ENCODE measurements at regions of chr5 and their contacts with region 1.

Region 1: GRCh38 chr5:66440202-66440680 is 156.0 kb upstream of the MAST4 start:
- DNase-seq: peak; percentile 55
- ATAC-seq: peak; percentile 98
- H3K4me3 Mint-ChIP-seq: no peak overlapping the region
- H3K27ac Mint-ChIP-seq: no peak overlapping the region
- H3K4me1 Mint-ChIP-seq: peaks cover 15% of the 10 kb centered on the region
- H3K27me3 Mint-ChIP-seq: peaks cover 2% of the 10 kb centered on the region

Region 2: GRCh38 chr5:66324357-66324756 is 115.9 kb before region 1 on chr5:
- CTCF ChIA-PET with region 1: no interaction called
- POLR2A ChIA-PET with region 1: no interaction called
- intact Hi-C with region 1: loop called in 1 of 2 experiments (anchors 1 kb)
- DNase-seq: no peak
- ATAC-seq: no peak
- H3K4me3 Mint-ChIP-seq: no peak overlapping the region
- H3K27ac Mint-ChIP-seq: no peak overlapping the region
- H3K4me1 Mint-ChIP-seq: peaks cover 11% of the 10 kb centered on the region
- H3K27me3 Mint-ChIP-seq: peaks cover 3% of the 10 kb centered on the region

Region 3: DNA sequence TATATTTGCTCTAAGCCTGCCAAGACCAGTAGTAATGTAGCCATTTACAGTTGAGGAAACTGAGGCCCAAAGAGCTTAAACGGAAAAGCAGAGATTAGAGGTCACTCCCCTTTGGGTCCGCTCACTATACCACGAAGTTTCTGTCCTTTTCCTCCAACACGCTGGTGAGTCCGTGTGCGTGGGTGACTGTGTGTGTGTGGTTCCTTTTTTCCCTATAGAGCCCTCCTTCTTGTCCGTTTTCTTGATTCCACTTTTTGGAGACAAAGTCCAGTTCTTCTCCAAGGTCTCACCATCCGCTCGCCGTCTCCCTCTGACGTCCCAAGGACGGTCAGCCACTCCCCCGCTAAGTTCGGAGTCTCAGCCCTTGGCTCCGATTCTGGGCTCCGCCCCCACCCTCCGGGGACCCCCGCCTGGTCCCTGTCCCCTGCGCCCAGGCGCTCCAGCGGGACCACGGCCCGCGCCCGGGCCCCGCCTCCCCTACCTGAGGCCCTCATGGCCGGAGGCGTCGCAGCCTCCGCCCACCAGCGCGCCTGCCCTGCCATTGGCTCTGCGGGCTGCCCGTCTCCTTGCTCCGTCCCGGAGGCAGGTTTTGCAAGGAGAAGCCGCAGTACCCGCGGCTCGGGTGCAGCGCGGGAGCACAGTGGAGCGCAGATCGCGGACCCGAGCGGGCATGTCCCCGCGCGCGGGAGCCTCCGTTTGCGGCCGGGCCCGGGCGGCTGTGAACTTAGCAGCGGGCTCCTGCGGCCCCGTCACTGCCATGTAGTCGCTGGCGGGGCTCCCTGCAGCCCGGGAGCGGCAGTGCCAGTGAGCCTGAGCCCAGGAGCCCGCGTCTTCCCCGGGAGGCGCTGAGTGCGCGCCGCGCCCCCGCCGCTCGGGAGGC is 155.8 kb after region 1 on chr5 and contains the start of gene MAST4:
- CTCF ChIA-PET with region 1: no interaction called
- POLR2A ChIA-PET with region 1: no interaction called
- intact Hi-C with region 1: loop called in 1 of 2 experiments (anchors 5 kb)
- DNase-seq: peak; percentile 86
- ATAC-seq: peak; percentile 97
- H3K4me3 Mint-ChIP-seq: peak within 1 kb of the TSS; percentile 69
- H3K27ac Mint-ChIP-seq: no peak within 1 kb of the TSS
- H3K4me1 Mint-ChIP-seq: peaks cover 16% of the 10 kb centered on the region
- H3K27me3 Mint-ChIP-seq: peaks cover 49% of the 10 kb centered on the region
- total RNA-seq, gene MAST4: 19.2 to 26.7 TPM

Measured in activated CD4-positive, alpha-beta T cell treated with anti-CD3 and anti-CD28 coated beads for 36 hours (primary cell).